A673 (cell line): ENCODE measurements at regions of chr2 and their contacts with region 1.

Region 1: DNA sequence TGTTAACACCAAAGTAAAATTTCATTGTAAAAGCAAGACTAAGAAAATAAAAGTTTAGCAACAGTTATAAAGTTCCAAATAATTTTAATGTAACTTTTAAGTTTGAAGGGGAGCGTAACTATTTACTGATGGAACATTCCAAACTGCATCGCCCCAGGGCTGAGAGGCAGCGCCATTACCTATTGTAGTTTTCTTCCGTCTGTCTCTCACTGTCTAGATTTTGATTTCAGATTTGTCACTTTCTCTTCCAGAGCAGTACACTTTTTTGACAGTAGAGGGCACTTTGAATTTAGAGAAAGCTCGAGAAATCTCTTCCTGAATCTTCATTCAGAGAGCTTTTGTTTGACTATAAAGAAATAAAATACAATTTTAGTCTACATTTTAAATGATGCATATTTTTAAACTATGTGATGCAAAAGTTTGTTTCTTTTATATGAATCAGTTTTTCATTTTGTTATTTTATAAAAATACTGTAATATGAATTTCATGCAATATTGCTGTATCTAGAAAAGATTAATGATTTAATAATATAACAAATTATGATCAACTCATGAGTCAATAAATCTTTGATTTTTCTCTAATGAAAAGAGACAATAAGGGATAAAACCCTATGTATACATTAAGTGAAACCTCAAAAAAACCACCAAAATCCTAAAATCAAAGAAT is 389.8 kb downstream of the FIGN start:
- DNase-seq: peak; percentile 78
- H3K4me3 ChIP-seq: no peak overlapping the region
- H3K27ac ChIP-seq: no peak overlapping the region
- H3K4me1 ChIP-seq: peaks cover 3% of the 10 kb centered on the region
- H3K27me3 ChIP-seq: no peaks in the 10 kb centered on the region
- CTCF ChIP-seq: peak; percentile 78

Region 2: DNA sequence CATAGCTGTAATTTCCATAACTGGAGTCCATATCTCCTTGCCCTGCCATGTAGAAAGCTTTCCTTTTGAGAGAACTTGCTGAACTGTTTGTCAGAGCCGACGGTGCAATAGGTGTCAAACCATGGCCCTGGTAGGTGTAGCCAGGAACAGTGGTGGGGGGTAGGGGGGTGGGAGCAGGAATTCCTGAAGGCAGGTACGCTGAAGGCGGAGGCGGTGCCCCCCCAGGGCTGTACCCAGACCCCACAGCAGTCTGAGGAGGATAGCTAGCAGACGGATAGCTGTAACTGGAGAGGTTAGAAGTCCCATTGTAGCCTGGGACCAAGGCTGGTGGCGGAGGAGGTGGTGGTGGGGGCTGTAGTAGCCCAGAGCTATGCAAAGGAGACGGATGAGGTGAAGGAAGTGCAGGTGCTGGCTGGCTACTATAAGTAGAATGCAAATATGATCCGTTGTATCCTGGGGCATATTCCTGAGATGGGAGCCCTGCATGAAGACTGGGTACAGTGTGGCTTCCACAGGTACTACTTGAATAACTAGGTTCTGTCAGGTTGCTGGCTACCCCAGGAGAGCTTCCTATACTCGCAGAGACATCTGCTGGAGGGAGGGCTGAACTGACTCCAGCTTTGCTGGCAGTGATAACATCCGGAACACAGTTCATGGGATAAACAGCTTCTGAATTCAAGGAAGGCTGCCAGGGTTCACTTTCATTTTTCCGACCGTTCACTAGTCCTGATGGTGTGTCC is 264.9 kb after region 1 on chr2:
- CTCF ChIA-PET with region 1: no interaction called
- POLR2A ChIA-PET with region 1: no interaction called
- intact Hi-C with region 1: loop called (anchors 5 kb)
- DNase-seq: peak; percentile 29
- H3K4me3 ChIP-seq: no peak overlapping the region
- H3K27ac ChIP-seq: no peak overlapping the region
- H3K4me1 ChIP-seq: no peaks in the 10 kb centered on the region
- H3K27me3 ChIP-seq: peaks cover 6% of the 10 kb centered on the region
- CTCF ChIP-seq: peak; percentile 46

Region 3: DNA sequence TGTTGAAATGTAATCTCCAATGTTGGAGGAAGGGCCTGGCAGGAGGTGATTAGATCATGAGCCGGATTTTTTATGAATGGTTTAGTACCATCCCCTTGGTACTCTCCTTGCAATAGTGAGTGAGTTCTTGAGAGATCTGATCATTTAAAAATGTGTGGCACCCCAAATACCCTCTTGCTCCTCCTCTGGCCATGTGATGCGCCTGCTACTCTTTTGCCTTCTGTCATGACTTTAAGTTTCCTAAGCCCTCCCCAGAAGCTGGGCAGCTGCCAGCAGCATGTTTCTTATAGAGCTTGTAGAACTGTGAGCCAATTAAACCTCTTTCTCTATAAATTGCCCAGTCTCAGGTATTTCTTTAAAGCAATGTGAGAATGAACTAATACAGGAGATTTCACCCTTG is 462.4 kb after region 1 on chr2:
- CTCF ChIA-PET with region 1: no interaction called
- POLR2A ChIA-PET with region 1: no interaction called
- intact Hi-C with region 1: no loop called
- DNase-seq: peak; percentile 2
- H3K4me3 ChIP-seq: no peak overlapping the region
- H3K27ac ChIP-seq: no peak overlapping the region
- H3K4me1 ChIP-seq: no peaks in the 10 kb centered on the region
- H3K27me3 ChIP-seq: no peaks in the 10 kb centered on the region
- CTCF ChIP-seq: no peak

Region 4: DNA sequence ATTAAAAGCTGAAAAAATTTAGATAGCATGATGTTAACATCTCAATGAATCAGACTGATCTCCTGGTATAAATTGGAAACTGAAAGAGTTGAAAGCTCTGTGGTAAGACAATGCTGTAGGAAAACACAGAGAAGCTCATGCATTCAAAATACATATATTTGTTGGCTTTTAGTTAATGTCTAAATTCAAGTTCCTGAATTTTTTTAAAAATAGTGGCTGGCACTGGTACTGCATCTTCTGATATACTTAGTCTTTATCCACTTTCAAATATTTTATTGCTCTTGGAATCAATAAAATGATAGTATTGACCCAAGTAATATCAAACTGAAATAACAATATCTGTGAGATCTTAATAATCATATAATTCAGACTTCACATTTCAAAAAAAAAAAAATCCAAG is 541.1 kb after region 1 on chr2:
- CTCF ChIA-PET with region 1: no interaction called
- POLR2A ChIA-PET with region 1: no interaction called
- intact Hi-C with region 1: loop called (anchors 10 kb)
- DNase-seq: no peak
- H3K4me3 ChIP-seq: no peak overlapping the region
- H3K27ac ChIP-seq: no peak overlapping the region
- H3K4me1 ChIP-seq: no peaks in the 10 kb centered on the region
- H3K27me3 ChIP-seq: no peaks in the 10 kb centered on the region
- CTCF ChIP-seq: peak; percentile 33; the same call in 1 of the 2 replicates

Region 5: GRCh38 chr2:164061129-164061746 is 715.2 kb after region 1 on chr2:
- CTCF ChIA-PET with region 1: interaction called, 5 read pairs
- POLR2A ChIA-PET with region 1: no interaction called
- intact Hi-C with region 1: loop called (anchors 5 kb)
- DNase-seq: peak; percentile 50
- H3K4me3 ChIP-seq: no peak overlapping the region
- H3K27ac ChIP-seq: no peak overlapping the region
- H3K4me1 ChIP-seq: no peaks in the 10 kb centered on the region
- H3K27me3 ChIP-seq: peaks cover 22% of the 10 kb centered on the region
- CTCF ChIP-seq: peak; percentile 77

Region 6: DNA sequence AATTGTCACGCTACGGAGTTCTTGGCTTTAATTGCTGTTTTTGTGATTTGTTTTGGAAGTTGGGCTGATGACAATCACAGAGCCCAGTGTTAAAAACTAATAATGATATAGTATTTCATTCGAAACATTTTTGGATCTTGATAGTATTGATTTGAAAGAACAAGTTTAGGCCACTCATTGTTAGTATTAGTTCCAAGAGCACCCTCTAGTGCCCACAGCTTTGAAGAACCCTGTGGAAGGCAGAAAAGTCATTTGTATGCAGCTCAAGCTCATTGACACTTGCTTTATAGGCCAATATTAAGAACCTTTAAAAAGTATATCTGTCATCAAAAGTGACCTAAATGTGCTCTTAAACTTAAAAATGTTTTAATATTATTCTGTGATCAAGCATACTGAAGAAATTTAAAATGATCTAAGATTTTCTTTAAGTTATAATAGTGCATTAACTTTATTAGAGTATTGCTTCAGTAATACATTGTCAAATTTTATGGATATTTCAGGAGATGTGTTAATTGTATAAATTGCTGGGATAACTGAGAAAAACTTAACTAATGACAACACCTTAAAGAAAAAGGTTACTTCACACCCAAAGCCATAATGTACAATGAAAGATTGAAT is 1084.2 kb after region 1 on chr2:
- CTCF ChIA-PET with region 1: no interaction called
- POLR2A ChIA-PET with region 1: no interaction called
- intact Hi-C with region 1: loop called (anchors 5 kb)
- DNase-seq: peak; percentile 45
- H3K4me3 ChIP-seq: no peak overlapping the region
- H3K27ac ChIP-seq: no peak overlapping the region
- H3K4me1 ChIP-seq: no peaks in the 10 kb centered on the region
- H3K27me3 ChIP-seq: peaks cover 69% of the 10 kb centered on the region
- CTCF ChIP-seq: peak; percentile 70

Region 7: DNA sequence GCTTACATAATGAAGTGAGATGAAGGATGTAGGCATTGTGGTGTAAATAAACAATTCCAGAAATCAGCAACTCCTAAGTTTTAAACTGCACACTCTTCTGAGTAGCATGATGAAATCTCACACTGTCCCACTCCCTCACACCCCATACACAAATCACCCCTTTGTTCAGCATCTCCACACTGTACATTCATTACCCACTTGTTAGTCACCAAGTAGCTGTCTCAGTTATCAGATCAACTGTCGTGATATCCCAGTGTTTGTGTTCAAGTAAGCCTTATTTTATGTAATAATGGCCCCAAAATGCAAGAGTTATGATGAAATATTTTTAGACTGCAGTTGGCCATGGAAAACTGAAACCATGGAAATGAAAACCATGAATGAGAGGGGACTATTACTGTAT is 1139.5 kb after region 1 on chr2:
- CTCF ChIA-PET with region 1: no interaction called
- POLR2A ChIA-PET with region 1: no interaction called
- intact Hi-C with region 1: loop called (anchors 10 kb)
- DNase-seq: no peak
- H3K4me3 ChIP-seq: no peak overlapping the region
- H3K27ac ChIP-seq: no peak overlapping the region
- H3K4me1 ChIP-seq: no peaks in the 10 kb centered on the region
- H3K27me3 ChIP-seq: peaks cover 15% of the 10 kb centered on the region
- CTCF ChIP-seq: no peak